Activated T-helper 1 cell treated with anti-CD3 and anti-CD28 coated beads, Interleukin-12 subunit alpha, Interleukin-12 subunit beta, Interleukin-2, Interleukin-4 antibody, amounts not matched to agents 30 ng/mL and 10 ng/mL and 1 ng/mL, durations not matched to agents 14 hours and 24 hours and 36 hours (primary cell): ENCODE measurements at regions of chr10 and their contacts with region 1.

Region 1: GRCh38 chr10:50636618-50637579 is 13.1 kb upstream of the SGMS1 start:
- DNase-seq: peak; percentile 40
- H3K4me3 Mint-ChIP-seq: peak overlapping the region; percentile 41
- H3K27ac Mint-ChIP-seq: peak overlapping the region; percentile 1
- H3K4me1 Mint-ChIP-seq: peaks cover 43% of the 10 kb centered on the region
- H3K27me3 Mint-ChIP-seq: peaks cover 29% of the 10 kb centered on the region

Region 2: DNA sequence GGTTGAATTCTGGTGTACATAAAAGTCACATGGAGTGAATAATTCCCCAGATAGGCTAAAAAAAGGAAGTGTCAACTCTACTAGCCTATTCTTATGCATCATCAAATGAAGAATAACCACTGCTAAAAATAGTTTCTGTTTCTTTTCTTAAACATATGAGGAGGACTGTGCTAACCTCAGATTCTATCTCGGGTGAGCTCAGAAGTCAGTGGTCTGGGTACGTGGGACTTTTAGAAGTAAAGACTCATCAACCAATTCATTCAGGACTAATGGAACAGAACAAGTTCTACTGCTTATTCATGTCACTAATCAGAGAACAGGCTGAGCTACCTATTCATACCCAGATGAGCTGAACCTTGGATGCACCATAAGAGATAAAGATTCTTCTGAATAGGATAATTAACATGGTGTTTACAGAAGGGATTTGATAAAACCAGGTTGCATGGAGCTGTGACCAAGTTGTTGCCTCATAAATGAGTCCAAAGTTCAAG is 376.1 kb before region 1 on chr10:
- intact Hi-C with region 1: loop called (anchors 2 kb)
- DNase-seq: no peak
- H3K4me3 Mint-ChIP-seq: no peak overlapping the region
- H3K27ac Mint-ChIP-seq: peak overlapping the region; percentile 23
- H3K4me1 Mint-ChIP-seq: peaks cover 20% of the 10 kb centered on the region
- H3K27me3 Mint-ChIP-seq: peaks cover 27% of the 10 kb centered on the region

Region 3: GRCh38 chr10:50325449-50326171 is 311.3 kb before region 1 on chr10:
- intact Hi-C with region 1: loop called (anchors 2 kb)
- DNase-seq: peak; percentile 15
- H3K4me3 Mint-ChIP-seq: peak overlapping the region; percentile 79
- H3K27ac Mint-ChIP-seq: peak overlapping the region; percentile 19
- H3K4me1 Mint-ChIP-seq: peaks cover 74% of the 10 kb centered on the region
- H3K27me3 Mint-ChIP-seq: no peaks in the 10 kb centered on the region

Region 4: GRCh38 chr10:50396491-50397311 is 240.2 kb before region 1 on chr10:
- intact Hi-C with region 1: loop called (anchors 1 kb)
- DNase-seq: no peak
- H3K4me3 Mint-ChIP-seq: peak overlapping the region; percentile 71
- H3K27ac Mint-ChIP-seq: peak overlapping the region; percentile 88
- H3K4me1 Mint-ChIP-seq: peaks cover 37% of the 10 kb centered on the region
- H3K27me3 Mint-ChIP-seq: peaks cover 1% of the 10 kb centered on the region

Region 5: DNA sequence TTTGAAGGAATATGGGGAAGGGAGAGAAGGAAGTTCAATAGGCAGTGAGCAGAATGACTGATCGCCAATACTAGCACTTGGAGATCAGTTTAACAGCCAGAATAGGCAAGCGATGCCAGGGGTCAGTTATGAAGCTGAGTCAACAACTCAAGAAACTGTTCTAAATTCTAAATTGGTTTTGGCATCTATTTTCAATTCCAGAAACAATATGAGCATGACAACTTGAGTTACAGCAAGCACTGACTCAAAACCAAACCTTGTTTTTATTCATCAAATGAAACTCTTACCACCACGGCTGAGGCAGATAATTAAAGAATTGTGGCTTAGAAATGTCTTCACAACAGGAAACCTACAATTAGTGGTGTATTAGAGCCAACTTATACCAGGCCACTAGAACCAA is 205.1 kb before region 1 on chr10:
- intact Hi-C with region 1: loop called (anchors 1 kb)
- DNase-seq: no peak
- H3K4me3 Mint-ChIP-seq: peak overlapping the region; percentile 37
- H3K27ac Mint-ChIP-seq: peak overlapping the region; percentile 67
- H3K4me1 Mint-ChIP-seq: peaks cover 35% of the 10 kb centered on the region
- H3K27me3 Mint-ChIP-seq: no peaks in the 10 kb centered on the region

Region 6: GRCh38 chr10:50540069-50540825 is 96.7 kb before region 1 on chr10:
- intact Hi-C with region 1: loop called (anchors 1 kb)
- DNase-seq: no peak
- H3K4me3 Mint-ChIP-seq: peak overlapping the region; percentile 41
- H3K27ac Mint-ChIP-seq: peak overlapping the region; percentile 95
- H3K4me1 Mint-ChIP-seq: peaks cover 87% of the 10 kb centered on the region
- H3K27me3 Mint-ChIP-seq: no peaks in the 10 kb centered on the region

Region 7: GRCh38 chr10:50739618-50740292 is 102.9 kb after region 1 on chr10 and contains the start of gene ASAH2B:
- intact Hi-C with region 1: loop called (anchors 5 kb)
- DNase-seq: peak; percentile 65
- H3K4me3 Mint-ChIP-seq: peak within 1 kb of the TSS; percentile 98
- H3K27ac Mint-ChIP-seq: peak within 1 kb of the TSS; percentile 93
- H3K4me1 Mint-ChIP-seq: peaks cover 17% of the 10 kb centered on the region
- H3K27me3 Mint-ChIP-seq: peaks cover 18% of the 10 kb centered on the region
- total RNA-seq, gene ASAH2B: 2.9 and 4.0 TPM in 2 replicates